WTC11 (cell line): ENCODE measurements at regions of chr1 and their contacts with region 1.

Region 1: GRCh38 chr1:63004868-63005267 is 220.9 kb downstream of the ATG4C start:
- DNase-seq: peak; percentile 37
- ATAC-seq: peak; percentile 84
- H3K4me3 Mint-ChIP-seq: no peak overlapping the region
- H3K27ac Mint-ChIP-seq: no peak overlapping the region
- H3K4me1 Mint-ChIP-seq: peaks cover 19% of the 10 kb centered on the region
- H3K27me3 Mint-ChIP-seq: no peaks in the 10 kb centered on the region
- CTCF ChIP-seq: no peak

Region 2: DNA sequence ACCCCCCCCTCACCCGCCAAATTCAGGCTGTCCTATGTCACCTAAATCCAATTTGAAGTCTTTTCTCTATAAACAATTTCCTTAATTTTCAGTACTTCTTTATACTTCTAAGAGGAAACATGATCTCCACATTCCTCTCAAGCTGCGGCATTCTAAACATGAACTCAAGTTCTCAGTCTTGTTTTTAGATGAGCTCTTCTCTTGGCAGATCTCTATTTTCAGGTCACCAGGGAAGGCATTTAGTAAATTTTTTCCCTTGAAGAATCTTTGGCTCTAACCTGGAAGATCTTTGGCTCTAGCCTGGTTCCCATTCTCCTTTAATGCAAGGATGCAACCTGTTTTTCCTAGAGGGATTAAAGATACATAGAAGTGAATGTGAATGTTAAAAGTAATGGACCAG is 27.5 kb before region 1 on chr1:
- CTCF ChIA-PET with region 1: no interaction called
- POLR2A ChIA-PET with region 1: no interaction called
- DNase-seq: no peak
- ATAC-seq: no peak
- H3K4me3 Mint-ChIP-seq: no peak overlapping the region
- H3K27ac Mint-ChIP-seq: no peak overlapping the region
- H3K4me1 Mint-ChIP-seq: peaks cover 10% of the 10 kb centered on the region
- H3K27me3 Mint-ChIP-seq: no peaks in the 10 kb centered on the region
- CTCF ChIP-seq: no peak

Region 3: GRCh38 chr1:63442141-63442475 is 437.2 kb after region 1 on chr1:
- CTCF ChIA-PET with region 1: interaction called, 11 read pairs
- POLR2A ChIA-PET with region 1: no interaction called
- DNase-seq: no peak
- ATAC-seq: no peak
- H3K4me3 Mint-ChIP-seq: no peak overlapping the region
- H3K27ac Mint-ChIP-seq: no peak overlapping the region
- H3K4me1 Mint-ChIP-seq: peaks cover 10% of the 10 kb centered on the region
- H3K27me3 Mint-ChIP-seq: no peaks in the 10 kb centered on the region
- CTCF ChIP-seq: no peak

Region 4: GRCh38 chr1:63537940-63538339 is 533.1 kb after region 1 on chr1:
- CTCF ChIA-PET with region 1: interaction called, 13 read pairs
- POLR2A ChIA-PET with region 1: no interaction called
- DNase-seq: no peak
- ATAC-seq: no peak
- H3K4me3 Mint-ChIP-seq: no peak overlapping the region
- H3K27ac Mint-ChIP-seq: no peak overlapping the region
- H3K4me1 Mint-ChIP-seq: peaks cover 13% of the 10 kb centered on the region
- H3K27me3 Mint-ChIP-seq: no peaks in the 10 kb centered on the region
- CTCF ChIP-seq: no peak